ENCODE measurements at regions of chr10 and their contacts with region 1.

Region 1: DNA sequence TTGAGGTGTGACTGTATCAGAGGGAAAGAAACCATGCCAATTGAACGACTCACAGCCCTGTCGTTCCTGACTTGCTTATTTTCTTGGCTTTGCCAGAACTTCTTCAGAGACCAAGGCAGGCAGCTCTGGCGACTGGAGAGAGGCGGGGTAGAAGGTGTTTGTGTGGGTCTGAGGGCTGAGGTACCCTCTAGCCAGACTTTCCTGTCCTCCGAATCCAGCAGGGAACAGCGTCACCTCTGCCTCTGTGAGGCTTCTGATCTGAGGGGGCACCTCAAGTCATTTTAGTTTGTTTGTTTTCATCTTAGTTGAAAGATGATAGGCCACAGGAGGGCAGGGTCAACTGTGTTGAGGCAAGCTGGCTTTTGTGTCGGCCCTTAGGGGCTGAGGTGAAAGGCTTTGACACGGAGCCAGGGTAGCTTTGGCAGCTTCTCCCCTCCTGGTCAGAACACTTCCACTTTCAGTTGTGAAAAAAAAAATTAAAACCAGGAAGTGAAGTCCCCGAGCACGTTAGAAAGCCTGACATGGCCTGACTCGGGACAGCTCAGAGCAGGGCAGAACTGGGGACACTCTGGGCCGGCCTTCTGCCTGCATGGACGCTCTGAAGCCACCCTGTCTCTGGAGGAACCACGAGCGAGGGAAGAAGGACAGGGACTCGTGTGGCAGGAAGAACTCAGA is 1.9 kb downstream of the ACSL5 start:
- DNase-seq: peak; percentile 62
- H3K4me3 Mint-ChIP-seq: peak overlapping the region; percentile 100
- H3K27ac Mint-ChIP-seq: peak overlapping the region; percentile 99
- H3K4me1 Mint-ChIP-seq: peaks cover 57% of the 10 kb centered on the region
- H3K27me3 Mint-ChIP-seq: no peaks in the 10 kb centered on the region

Region 2: GRCh38 chr10:112327678-112328077 is 48.2 kb before region 1 on chr10:
- CTCF ChIA-PET with region 1: no interaction called
- POLR2A ChIA-PET with region 1: no interaction called
- DNase-seq: no peak
- H3K4me3 Mint-ChIP-seq: no peak overlapping the region
- H3K27ac Mint-ChIP-seq: no peak overlapping the region
- H3K4me1 Mint-ChIP-seq: no peaks in the 10 kb centered on the region
- H3K27me3 Mint-ChIP-seq: peaks cover 7% of the 10 kb centered on the region

Region 3: GRCh38 chr10:112363696-112364688 is 11.9 kb before region 1 on chr10:
- CTCF ChIA-PET with region 1: no interaction called
- POLR2A ChIA-PET with region 1: interaction called, 20 read pairs
- DNase-seq: no peak
- H3K4me3 Mint-ChIP-seq: no peak overlapping the region
- H3K27ac Mint-ChIP-seq: no peak overlapping the region
- H3K4me1 Mint-ChIP-seq: peaks cover 3% of the 10 kb centered on the region
- H3K27me3 Mint-ChIP-seq: no peaks in the 10 kb centered on the region

Region 4: GRCh38 chr10:112389147-112389822 is 13.4 kb after region 1 on chr10:
- CTCF ChIA-PET with region 1: interaction called, 10 read pairs
- POLR2A ChIA-PET with region 1: interaction called, 81 read pairs
- DNase-seq: peak; percentile 64
- H3K4me3 Mint-ChIP-seq: no peak overlapping the region
- H3K27ac Mint-ChIP-seq: peak overlapping the region; percentile 75
- H3K4me1 Mint-ChIP-seq: peaks cover 50% of the 10 kb centered on the region
- H3K27me3 Mint-ChIP-seq: no peaks in the 10 kb centered on the region